Transverse colon (tissue), 4 donors: ENCODE measurements at regions of chr13 and their contacts with region 1.

Region 1: DNA sequence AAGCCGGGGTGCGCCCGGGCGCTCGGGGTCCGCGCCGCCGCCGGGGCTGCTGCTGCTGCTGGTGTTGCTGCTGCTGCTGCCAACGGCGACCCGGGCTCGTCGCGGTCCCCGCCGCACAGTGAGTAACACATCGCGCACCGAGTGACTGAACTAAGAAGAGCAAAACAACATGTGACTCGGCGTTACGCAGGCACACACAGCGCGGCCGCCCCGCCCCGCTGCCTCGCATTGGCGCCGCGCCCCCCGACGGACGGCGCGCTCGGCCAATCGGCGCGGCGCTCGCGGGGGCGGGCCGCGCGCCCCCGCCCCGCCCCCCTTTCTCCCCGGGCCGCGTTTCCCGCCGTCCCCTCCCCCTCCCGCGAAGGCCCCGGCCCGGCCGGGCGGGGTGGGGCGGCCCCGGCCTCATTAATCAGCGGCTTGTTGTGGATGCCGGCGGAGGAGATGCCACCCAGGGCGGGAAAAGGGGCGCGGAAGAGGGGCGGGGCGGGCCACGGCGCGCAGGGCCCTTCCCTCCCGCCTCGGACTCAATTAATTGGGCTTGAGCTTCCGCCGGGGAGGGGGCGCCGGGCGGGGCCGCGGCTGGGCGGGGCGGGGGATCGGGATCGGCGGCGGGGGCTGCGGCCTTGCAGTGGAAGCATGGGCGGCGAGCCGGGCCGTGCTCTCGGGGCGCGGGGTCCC is at the start of gene IRS2:
- DNase-seq: peak; percentile 95
- H3K4me3 ChIP-seq: peak within 1 kb of the TSS; percentile 60 to 89 (median 77)
- H3K27ac ChIP-seq: peak within 1 kb of the TSS; percentile 71 to 92 (median 89)
- H3K4me1 ChIP-seq: peaks cover 0 to 33% (median 24%) of the 10 kb centered on the region in 4 donors
- H3K27me3 ChIP-seq: peaks cover 25% of the 10 kb centered on the region
- CTCF ChIP-seq: no peak
- EP300 ChIP-seq: no peak
- POLR2A ChIP-seq: peak; percentile 89
- total RNA-seq, gene IRS2: 12.5 to 72.6 (median 28.5) TPM

Region 2: GRCh38 chr13:108961542-108962125 is 825.0 kb before region 1 on chr13:
- in situ Hi-C with region 1: loop called in 1 of 4 experiments (anchors 25 kb)
- intact Hi-C with region 1: no loop called
- DNase-seq: no peak
- H3K4me3 ChIP-seq: no peak overlapping the region
- H3K27ac ChIP-seq: no peak overlapping the region
- H3K4me1 ChIP-seq: no peaks in the 10 kb centered on the region
- H3K27me3 ChIP-seq: no peaks in the 10 kb centered on the region
- CTCF ChIP-seq: peak; percentile 76 to 87 (median 84)
- EP300 ChIP-seq: no peak
- POLR2A ChIP-seq: no peak

Region 3: GRCh38 chr13:109145631-109146030 is 641.0 kb before region 1 on chr13:
- in situ Hi-C with region 1: loop called in 3 of 4 experiments (anchors 25 kb)
- intact Hi-C with region 1: no loop called
- DNase-seq: peak; percentile 30
- H3K4me3 ChIP-seq: no peak overlapping the region
- H3K27ac ChIP-seq: no peak overlapping the region
- H3K4me1 ChIP-seq: peaks cover 0 to under 1% (median 0%) of the 10 kb centered on the region in 4 donors
- H3K27me3 ChIP-seq: peaks cover 21% of the 10 kb centered on the region
- CTCF ChIP-seq: peak; percentile 63 to 71 (median 64)
- EP300 ChIP-seq: no peak
- POLR2A ChIP-seq: no peak

Region 4: GRCh38 chr13:109447667-109448066 is 338.9 kb before region 1 on chr13:
- in situ Hi-C with region 1: no loop called
- intact Hi-C with region 1: loop called (anchors 5 kb)
- DNase-seq: no peak
- H3K4me3 ChIP-seq: no peak overlapping the region
- H3K27ac ChIP-seq: no peak overlapping the region
- H3K4me1 ChIP-seq: no peaks in the 10 kb centered on the region
- H3K27me3 ChIP-seq: no peaks in the 10 kb centered on the region
- CTCF ChIP-seq: no peak
- EP300 ChIP-seq: no peak
- POLR2A ChIP-seq: no peak

Region 5: DNA sequence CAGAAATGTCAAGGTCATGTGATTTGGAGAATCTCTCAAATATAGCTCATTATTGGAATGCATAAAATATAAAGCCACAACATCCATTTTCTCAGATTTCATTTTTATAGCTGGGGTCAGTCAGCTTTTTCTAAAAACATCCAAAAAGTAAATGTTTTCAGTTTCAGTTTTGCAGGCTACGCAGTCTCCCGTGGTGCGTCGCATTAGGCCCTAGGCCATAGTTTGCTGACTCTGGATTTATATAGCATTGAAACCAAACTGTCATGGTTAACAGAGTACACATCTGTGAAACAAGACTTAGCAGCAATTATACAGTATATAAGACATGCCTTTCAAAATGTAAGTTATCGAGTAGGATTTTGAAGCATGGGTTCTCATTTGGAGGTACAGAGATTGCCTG is 140.2 kb before region 1 on chr13:
- in situ Hi-C with region 1: no loop called
- intact Hi-C with region 1: no loop called
- DNase-seq: no peak
- H3K4me3 ChIP-seq: no peak overlapping the region
- H3K27ac ChIP-seq: peak overlapping the region in 1 of 4 donors; percentile 19
- H3K4me1 ChIP-seq: peaks cover 0 to 6% (median 0%) of the 10 kb centered on the region in 4 donors
- H3K27me3 ChIP-seq: no peaks in the 10 kb centered on the region
- CTCF ChIP-seq: no peak
- EP300 ChIP-seq: no peak
- POLR2A ChIP-seq: no peak

Region 6: DNA sequence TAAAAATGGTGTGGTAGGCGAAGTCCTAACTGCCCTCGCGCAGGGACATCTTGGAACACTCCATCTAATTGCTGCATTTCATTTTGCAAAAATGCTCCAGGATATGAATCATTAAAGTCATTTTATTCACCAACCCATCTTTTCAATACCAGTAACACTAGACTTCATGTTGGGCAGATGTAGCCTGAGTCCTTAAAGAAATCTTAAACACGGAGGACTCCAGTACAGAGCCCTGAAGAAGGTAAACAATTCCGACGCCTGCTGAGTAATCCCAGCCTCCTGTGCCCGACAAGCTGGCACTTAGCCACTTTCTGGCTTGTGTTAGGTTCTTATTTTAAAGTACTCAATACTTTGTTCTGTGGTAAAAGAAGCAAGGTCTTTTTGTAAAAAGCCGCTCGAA is 57.8 kb after region 1 on chr13:
- in situ Hi-C with region 1: no loop called
- intact Hi-C with region 1: no loop called
- DNase-seq: no peak
- H3K4me3 ChIP-seq: no peak overlapping the region
- H3K27ac ChIP-seq: peak overlapping the region in 2 of 4 donors; percentile 17 to 31
- H3K4me1 ChIP-seq: no peaks in the 10 kb centered on the region
- H3K27me3 ChIP-seq: no peaks in the 10 kb centered on the region
- CTCF ChIP-seq: no peak
- EP300 ChIP-seq: no peak
- POLR2A ChIP-seq: no peak

Region 7: DNA sequence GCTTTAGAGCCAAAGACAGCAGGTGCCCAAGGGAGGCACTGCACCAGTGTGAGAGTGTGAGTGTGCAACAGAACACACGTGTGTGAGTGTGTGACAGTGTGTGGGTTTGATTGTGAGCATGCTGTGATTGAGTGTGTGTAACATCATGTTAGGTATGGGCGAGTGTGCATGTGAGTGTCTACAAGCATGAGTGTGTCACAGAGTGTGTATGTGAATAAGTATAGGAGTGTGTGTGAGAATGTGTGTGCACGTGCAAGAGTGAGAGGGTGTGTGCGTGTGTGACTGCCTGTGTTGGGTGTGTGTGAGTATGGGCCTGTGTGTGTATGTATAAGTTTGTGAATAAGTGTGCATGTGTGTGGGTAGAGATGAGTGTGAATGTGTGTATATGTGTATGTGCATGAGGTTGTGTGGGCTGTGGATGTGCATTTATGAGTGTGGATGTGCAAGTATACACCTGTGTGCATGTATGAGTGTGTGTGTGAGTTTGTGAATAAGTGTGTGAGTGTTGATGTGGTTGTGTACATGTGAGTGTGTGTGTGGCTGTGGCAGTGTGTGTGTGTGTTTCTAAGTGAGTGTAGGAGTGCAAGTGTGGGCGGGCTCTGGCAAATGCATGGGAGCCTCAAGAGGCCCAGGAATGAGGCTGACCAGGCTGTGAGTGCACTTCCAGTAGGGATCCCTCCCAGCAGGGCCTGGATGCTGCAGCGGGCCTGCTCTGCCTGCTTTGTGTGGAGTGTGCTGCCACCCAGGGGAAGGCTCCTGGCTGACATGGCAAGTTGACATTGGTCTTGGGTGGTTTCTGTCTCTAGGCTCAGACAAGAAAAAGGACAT is 322.0 kb after region 1 on chr13:
- in situ Hi-C with region 1: loop called in 2 of 4 experiments (anchors 25 kb)
- intact Hi-C with region 1: loop called (anchors 5 kb)
- DNase-seq: peak; percentile 59
- H3K4me3 ChIP-seq: no peak overlapping the region
- H3K27ac ChIP-seq: peak overlapping the region in 3 of 4 donors; percentile 53 to 72 (median 56)
- H3K4me1 ChIP-seq: peaks cover 0 to 14% (median 5%) of the 10 kb centered on the region in 4 donors
- H3K27me3 ChIP-seq: no peaks in the 10 kb centered on the region
- CTCF ChIP-seq: peak; percentile 37 to 54 (median 41)
- EP300 ChIP-seq: no peak
- POLR2A ChIP-seq: no peak

Region 8: DNA sequence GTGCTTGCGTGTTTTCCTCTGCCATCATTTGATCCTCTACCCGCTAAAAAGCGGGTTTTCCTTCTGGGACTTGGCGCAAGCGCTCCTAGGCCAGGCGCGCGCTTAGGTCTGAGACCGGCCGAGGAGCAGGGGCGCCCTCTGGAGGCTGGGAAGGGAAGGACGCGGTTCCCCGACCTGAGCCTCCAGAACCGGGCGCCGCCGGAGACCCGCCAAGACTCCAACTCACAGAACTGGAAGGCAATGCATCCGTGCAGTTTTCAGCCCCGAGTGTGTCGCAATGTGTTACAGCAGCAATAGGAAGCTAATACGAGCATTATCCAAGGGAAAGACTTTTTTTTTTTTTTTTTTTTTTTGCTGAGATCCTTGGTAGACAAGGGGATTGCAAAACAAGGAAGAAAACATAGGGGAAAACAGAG is 329.5 kb after region 1 on chr13:
- in situ Hi-C with region 1: loop called in 2 of 4 experiments (anchors 25 kb)
- intact Hi-C with region 1: no loop called
- DNase-seq: peak; percentile 63
- H3K4me3 ChIP-seq: no peak overlapping the region
- H3K27ac ChIP-seq: no peak overlapping the region
- H3K4me1 ChIP-seq: no peaks in the 10 kb centered on the region
- H3K27me3 ChIP-seq: peaks cover 28% of the 10 kb centered on the region
- CTCF ChIP-seq: peak; percentile 67 to 81 (median 75)
- EP300 ChIP-seq: no peak
- POLR2A ChIP-seq: no peak